ENCODE measurements at regions of chr2 and their contacts with region 1.

Region 1: GRCh38 chr2:12931186-12931844 is 214.6 kb downstream of the TRIB2 start:
- DNase-seq: no peak
- H3K4me3 ChIP-seq: no peak overlapping the region
- H3K27ac ChIP-seq: no peak overlapping the region
- H3K4me1 ChIP-seq: no peaks in the 10 kb centered on the region
- H3K27me3 ChIP-seq: no peaks in the 10 kb centered on the region
- CTCF ChIP-seq: peak; percentile 65 to 94 (median 83)

Region 2: GRCh38 chr2:11829947-11830707 is 1101.2 kb before region 1 on chr2:
- intact Hi-C with region 1: loop called (anchors 5 kb)
- DNase-seq: peak; percentile 24 to 82
- H3K4me3 ChIP-seq: peak overlapping the region; percentile 55
- H3K27ac ChIP-seq: peak overlapping the region; percentile 69 to 89
- H3K4me1 ChIP-seq: peaks cover 4 to 17% of the 10 kb centered on the region in 2 donors
- H3K27me3 ChIP-seq: no peaks in the 10 kb centered on the region
- CTCF ChIP-seq: peak in 1 of 3 experiments; percentile 35

Region 3: DNA sequence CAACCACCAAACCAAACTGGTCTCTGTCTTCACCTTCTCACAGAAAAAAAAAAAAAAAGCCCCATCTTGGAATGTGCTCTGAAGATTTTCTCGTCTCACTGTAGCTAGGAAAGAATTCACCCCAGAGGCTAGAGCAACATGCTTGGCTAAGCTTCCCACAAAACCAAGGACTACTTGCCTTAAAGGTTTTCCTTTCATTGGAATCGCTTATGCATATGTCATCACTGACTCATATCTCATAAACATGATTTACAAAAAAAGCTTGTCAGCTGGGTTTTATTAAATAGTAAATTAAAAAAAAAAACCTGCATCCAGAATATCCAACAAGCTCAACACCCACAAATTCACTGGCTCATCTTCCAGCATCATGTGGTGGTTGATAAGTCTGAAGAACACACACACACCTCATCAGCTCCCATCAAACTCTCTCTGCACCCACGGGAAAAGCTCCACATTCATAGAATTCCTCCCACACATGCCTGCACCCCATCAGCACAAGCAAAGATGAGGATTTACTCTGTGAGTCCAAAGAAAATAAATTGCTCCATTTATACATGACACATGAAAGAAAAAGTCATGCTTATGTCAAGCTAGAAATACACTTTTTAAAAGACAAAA is 396.6 kb before region 1 on chr2:
- intact Hi-C with region 1: loop called (anchors 10 kb)
- DNase-seq: no peak
- H3K4me3 ChIP-seq: no peak overlapping the region
- H3K27ac ChIP-seq: peak overlapping the region; percentile 31 to 34
- H3K4me1 ChIP-seq: peaks cover 3 to 25% of the 10 kb centered on the region in 2 donors
- H3K27me3 ChIP-seq: no peaks in the 10 kb centered on the region
- CTCF ChIP-seq: no peak